Activated T-helper 1 cell treated with anti-CD3 and anti-CD28 coated beads, Interleukin-12 subunit alpha, Interleukin-12 subunit beta, Interleukin-2, Interleukin-4 antibody, amounts not matched to agents 30 ng/mL and 10 ng/mL and 1 ng/mL, durations not matched to agents 14 hours and 24 hours and 36 hours (primary cell): ENCODE measurements at regions of chr16 and their contacts with region 1.

Region 1: GRCh38 chr16:48609652-48610029 is 339 bp downstream of the N4BP1 start:
- DNase-seq: no peak
- H3K4me3 Mint-ChIP-seq: no peak overlapping the region
- H3K27ac Mint-ChIP-seq: peak overlapping the region; percentile 93
- H3K4me1 Mint-ChIP-seq: peaks cover 50% of the 10 kb centered on the region
- H3K27me3 Mint-ChIP-seq: no peaks in the 10 kb centered on the region

Region 2: DNA sequence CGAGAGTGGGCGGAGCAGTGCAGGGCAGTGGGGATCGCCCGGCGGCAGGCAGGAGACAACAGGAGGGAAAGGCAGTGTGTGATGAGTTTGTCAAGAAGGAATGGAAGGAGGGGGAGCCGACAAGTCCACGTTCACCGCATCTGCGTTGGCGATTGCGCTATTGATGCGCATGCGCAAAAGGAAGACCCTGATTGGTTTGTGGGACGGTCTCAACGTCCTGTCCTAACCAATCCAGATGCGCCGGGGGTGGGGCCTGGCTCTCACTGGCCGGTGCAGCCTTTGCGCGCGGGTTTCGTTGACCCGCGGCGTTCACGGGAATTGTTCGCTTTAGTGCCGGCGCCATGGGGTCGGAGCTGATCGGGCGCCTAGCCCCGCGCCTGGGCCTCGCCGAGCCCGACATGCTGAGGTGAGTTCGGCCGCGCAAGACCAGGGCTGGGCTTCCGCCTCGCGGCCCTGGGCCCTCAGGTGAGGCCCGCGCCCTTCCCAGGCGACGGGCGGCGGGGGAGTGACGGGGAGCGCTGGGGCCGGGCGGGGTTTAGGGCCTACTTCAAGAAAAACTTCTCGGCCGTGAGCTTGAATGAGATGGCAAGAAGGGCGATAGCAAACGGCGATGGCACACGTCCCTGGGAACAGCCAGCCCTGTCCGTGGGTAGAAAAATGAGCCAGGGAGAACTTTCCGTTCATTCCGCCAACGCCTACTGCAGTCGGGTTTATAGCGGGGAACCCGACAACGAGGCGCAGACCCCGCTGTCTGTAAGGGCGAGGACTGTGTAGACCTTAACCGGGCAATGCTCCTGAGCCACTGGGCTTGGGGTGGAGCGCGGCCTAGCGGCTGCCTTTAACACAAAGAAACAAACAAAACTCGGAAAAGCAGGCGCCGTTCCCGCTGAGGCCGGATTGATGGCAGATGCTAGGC is 1920.0 kb before region 1 on chr16 and contains the start of gene ORC6:
- intact Hi-C with region 1: loop called (anchors 2 kb)
- DNase-seq: peak; percentile 95
- H3K4me3 Mint-ChIP-seq: no peak within 1 kb of the TSS
- H3K27ac Mint-ChIP-seq: no peak within 1 kb of the TSS
- H3K4me1 Mint-ChIP-seq: peaks cover 29% of the 10 kb centered on the region
- H3K27me3 Mint-ChIP-seq: no peaks in the 10 kb centered on the region
- total RNA-seq, gene ORC6: 68.2 and 69.1 TPM in 2 replicates

Region 3: DNA sequence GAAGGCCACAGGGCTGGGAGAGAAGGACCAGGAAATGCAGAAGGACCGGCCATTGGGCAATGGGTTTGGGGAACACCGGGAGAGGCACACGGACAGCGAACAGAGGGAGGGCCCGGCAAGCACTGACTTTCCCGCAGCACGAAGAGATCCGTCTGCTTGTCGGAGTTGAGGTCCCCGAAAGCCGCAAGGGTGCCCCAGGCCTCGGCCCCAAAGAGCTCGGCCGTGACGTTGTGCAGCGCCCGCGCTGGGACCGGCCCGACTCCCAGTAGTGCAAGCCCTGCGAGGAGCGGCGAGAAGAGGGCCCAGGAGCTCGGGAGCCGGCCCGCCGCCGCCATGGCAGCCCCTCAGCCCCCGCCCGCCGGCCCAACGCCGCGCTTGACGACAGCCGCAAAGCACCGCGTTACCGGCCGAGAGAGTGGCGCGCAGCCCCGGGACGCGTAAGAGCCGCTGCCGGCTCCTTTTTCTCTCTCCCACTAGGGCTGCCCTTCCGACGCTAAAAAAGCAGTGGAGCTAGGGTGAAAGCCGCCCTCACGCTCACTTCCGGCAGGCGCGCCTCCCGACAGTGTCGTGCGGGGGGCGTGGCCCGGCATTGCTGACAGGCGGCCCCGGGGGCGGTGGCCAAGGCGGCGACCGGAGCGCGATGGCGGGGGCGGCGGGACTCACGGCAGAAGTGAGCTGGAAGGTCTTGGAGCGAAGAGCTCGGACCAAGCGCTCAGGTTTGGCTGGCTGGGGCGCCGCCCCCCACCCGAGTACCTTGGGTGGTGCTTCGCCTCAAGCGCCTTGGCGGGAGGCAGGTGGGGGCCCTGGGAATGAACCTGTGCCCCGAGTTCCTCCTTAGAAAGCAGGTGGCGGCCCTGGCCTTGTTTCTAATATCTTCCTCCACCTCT is 1148.7 kb before region 1 on chr16 and contains the starts of genes ITFG1 and PHKB:
- intact Hi-C with region 1: loop called (anchors 1 kb)
- DNase-seq: peak; percentile 95
- H3K4me3 Mint-ChIP-seq: peak within 1 kb of the TSS; percentile 90
- H3K27ac Mint-ChIP-seq: peak within 1 kb of the TSS; percentile 97
- H3K4me1 Mint-ChIP-seq: peaks cover 51% of the 10 kb centered on the region
- H3K27me3 Mint-ChIP-seq: no peaks in the 10 kb centered on the region
- total RNA-seq, gene ITFG1: 25.4 and 27.6 TPM in 2 replicates
- total RNA-seq, gene PHKB: 24.4 and 26.6 TPM in 2 replicates

Region 4: DNA sequence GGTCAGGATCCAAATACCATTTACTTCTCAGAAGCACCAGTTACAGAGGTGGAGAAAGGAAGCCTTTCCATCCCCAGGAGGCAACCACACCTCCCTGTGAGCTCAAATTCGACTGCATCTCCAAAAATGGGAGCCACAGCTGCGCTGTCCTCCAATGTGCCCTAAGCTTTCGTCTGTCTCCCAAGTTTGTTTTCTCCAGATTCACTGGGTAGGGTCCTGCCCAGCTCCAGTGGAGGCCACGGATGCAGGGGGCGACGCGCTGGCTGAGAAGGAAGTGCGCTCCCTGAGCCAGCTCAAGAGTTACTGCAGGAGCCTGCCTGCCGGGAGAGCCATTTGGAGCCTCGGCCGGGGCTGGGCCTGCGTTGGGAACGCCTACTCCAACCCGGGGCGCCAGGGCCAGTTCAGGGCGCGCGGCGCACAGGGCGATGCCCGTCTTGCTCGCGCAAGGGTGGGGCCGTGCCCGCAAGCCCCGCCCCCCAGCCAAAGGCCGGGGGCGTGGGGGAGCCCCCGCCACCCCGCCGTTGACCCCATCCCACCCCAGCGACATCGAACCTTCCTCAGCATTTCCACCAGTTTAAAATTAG is 244.0 kb before region 1 on chr16:
- intact Hi-C with region 1: loop called (anchors 2 kb)
- DNase-seq: peak; percentile 80
- H3K4me3 Mint-ChIP-seq: peak overlapping the region; percentile 90
- H3K27ac Mint-ChIP-seq: peak overlapping the region; percentile 96
- H3K4me1 Mint-ChIP-seq: peaks cover 59% of the 10 kb centered on the region
- H3K27me3 Mint-ChIP-seq: no peaks in the 10 kb centered on the region

Region 5: GRCh38 chr16:48452977-48453760 is 156.5 kb before region 1 on chr16:
- intact Hi-C with region 1: loop called (anchors 1 kb)
- DNase-seq: no peak
- H3K4me3 Mint-ChIP-seq: no peak overlapping the region
- H3K27ac Mint-ChIP-seq: no peak overlapping the region
- H3K4me1 Mint-ChIP-seq: peaks cover 5% of the 10 kb centered on the region
- H3K27me3 Mint-ChIP-seq: peaks cover 14% of the 10 kb centered on the region

Region 6: GRCh38 chr16:48565752-48566151 is 43.9 kb before region 1 on chr16:
- intact Hi-C with region 1: loop called (anchors 1 kb)
- DNase-seq: no peak
- H3K4me3 Mint-ChIP-seq: no peak overlapping the region
- H3K27ac Mint-ChIP-seq: peak overlapping the region; percentile 87
- H3K4me1 Mint-ChIP-seq: peaks cover 76% of the 10 kb centered on the region
- H3K27me3 Mint-ChIP-seq: no peaks in the 10 kb centered on the region

Region 7: GRCh38 chr16:48596326-48596725 is 13.3 kb before region 1 on chr16:
- intact Hi-C with region 1: loop called (anchors 1 kb)
- DNase-seq: peak; percentile 54
- H3K4me3 Mint-ChIP-seq: peak overlapping the region; percentile 57
- H3K27ac Mint-ChIP-seq: peak overlapping the region; percentile 90
- H3K4me1 Mint-ChIP-seq: peaks cover 53% of the 10 kb centered on the region
- H3K27me3 Mint-ChIP-seq: no peaks in the 10 kb centered on the region

Region 8: DNA sequence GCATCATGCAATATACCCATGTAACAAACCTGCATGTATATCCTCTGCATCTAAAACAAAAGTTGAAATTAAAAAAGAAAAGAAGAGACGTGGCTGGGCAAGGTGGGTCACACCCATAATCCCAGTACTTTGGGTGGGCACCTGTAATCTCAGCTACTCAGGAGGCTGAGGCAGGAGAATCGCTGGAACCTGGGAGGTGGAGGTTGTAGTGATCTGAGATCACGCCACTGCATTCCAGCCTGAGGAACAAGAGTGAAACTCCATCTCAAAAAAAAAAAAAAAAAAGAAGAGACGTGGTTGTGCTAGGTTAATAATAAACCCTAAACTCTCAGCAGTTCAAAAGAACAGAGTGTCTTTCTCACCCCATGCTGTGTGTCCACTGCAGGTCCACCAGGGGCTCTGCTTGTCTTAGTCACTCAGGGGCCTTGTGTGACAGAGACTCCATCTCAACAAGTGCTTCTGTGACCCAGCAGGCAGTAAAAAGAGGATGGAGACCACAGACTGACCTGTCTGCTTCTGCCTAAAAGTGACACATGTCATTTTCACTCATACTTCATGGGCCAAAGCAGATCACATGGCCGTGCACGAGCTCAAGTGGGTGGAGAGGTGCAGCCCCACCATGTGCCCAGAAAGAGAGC is 22.6 kb after region 1 on chr16:
- intact Hi-C with region 1: no loop called
- DNase-seq: no peak
- H3K4me3 Mint-ChIP-seq: no peak overlapping the region
- H3K27ac Mint-ChIP-seq: no peak overlapping the region
- H3K4me1 Mint-ChIP-seq: peaks cover 11% of the 10 kb centered on the region
- H3K27me3 Mint-ChIP-seq: peaks cover 11% of the 10 kb centered on the region

Region 9: GRCh38 chr16:48704710-48705109 is 95.1 kb after region 1 on chr16:
- intact Hi-C with region 1: no loop called
- DNase-seq: no peak
- H3K4me3 Mint-ChIP-seq: no peak overlapping the region
- H3K27ac Mint-ChIP-seq: no peak overlapping the region
- H3K4me1 Mint-ChIP-seq: no peaks in the 10 kb centered on the region
- H3K27me3 Mint-ChIP-seq: no peaks in the 10 kb centered on the region